ENCODE measurements at regions of chr14 and their contacts with region 1.

Region 1: GRCh38 chr14:91373591-91374254 is 43.9 kb downstream of the CCDC88C start:
- DNase-seq: peak; percentile 83
- H3K4me3 Mint-ChIP-seq: peak overlapping the region; percentile 58
- H3K27ac Mint-ChIP-seq: peak overlapping the region; percentile 93
- H3K4me1 Mint-ChIP-seq: peaks cover 99% of the 10 kb centered on the region
- H3K27me3 Mint-ChIP-seq: no peaks in the 10 kb centered on the region

Region 2: DNA sequence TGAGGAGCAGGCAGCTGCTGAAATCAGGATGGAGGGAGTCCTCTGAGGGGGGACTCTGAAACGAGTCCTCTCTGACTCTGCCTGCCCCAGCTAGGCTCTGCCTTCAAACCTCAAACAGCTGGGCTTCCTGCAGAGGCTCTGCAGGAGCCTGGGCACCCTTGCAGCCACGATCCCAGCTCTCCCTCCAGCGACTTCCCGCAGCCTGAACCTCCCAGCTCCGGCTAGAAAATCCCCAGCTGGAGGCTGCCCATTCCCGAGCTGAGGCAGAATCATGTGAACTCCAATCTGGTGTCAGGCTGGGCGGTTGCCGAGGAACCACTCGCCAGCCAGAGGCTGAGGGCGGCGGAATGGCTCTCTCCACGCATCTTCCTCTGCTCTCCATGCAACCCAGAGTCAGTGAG is 129.2 kb before region 1 on chr14 and contains the start of gene GPR68:
- CTCF ChIA-PET with region 1: interaction called, 3 read pairs
- intact Hi-C with region 1: loop called (anchors 2 kb)
- DNase-seq: peak; percentile 39
- H3K4me3 Mint-ChIP-seq: peak within 1 kb of the TSS; percentile 55
- H3K27ac Mint-ChIP-seq: peak within 1 kb of the TSS; percentile 97
- H3K4me1 Mint-ChIP-seq: peaks cover 81% of the 10 kb centered on the region
- H3K27me3 Mint-ChIP-seq: no peaks in the 10 kb centered on the region
- total RNA-seq, gene GPR68: 1.2 to 1.3 TPM

Region 3: DNA sequence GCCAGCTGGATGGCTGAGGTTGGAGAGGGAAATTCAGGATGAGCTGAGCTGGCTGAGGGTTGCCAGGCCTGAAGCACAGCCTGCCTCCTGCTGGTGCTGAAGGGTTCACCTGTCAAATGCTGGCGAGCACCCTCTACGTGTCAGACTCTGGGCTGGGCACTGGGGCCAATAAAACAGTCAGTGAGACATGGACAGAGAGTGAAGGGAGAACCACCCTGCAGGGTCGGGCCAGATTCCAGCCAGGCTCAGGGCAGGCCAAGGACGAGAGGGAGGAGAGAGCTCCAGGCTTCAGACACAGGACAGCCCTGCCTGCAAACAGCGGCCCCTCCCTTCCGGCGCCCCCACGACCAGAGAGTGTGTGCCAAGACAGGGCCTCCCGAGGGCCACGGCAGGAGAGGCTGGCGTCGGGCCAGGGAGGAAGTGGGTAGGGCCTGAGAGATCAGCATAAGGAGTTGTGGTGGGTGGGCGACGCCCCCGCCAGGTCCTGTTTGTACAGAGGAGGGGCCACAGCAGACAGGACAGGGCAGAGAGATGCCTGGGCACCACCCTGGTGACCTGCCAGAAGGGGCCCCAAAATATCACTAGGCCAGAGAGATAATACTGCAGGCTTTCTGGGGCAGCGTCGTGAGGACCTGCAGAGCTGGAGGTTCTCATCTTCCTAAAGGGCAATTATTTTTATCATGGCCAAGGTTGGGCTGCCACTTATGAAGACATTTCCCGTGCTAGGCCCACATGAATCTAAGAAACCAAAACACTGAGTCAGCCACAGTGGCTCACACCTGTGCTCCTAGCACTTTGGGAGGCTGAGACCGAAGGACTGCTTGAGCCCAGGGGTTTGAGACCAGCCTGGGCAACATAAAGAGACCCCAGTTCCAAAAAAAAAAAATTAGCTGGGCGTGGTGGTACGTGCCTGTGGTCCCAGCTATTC is 56.1 kb before region 1 on chr14:
- CTCF ChIA-PET with region 1: interaction called, 7 read pairs
- intact Hi-C with region 1: loop called (anchors 1 kb)
- DNase-seq: peak; percentile 87
- H3K4me3 Mint-ChIP-seq: peak overlapping the region; percentile 60
- H3K27ac Mint-ChIP-seq: peak overlapping the region; percentile 95
- H3K4me1 Mint-ChIP-seq: peaks cover 72% of the 10 kb centered on the region
- H3K27me3 Mint-ChIP-seq: no peaks in the 10 kb centered on the region

Region 4: GRCh38 chr14:91388551-91388975 is 14.8 kb after region 1 on chr14:
- CTCF ChIA-PET with region 1: no interaction called
- intact Hi-C with region 1: loop called (anchors 1 kb)
- DNase-seq: peak; percentile 69
- H3K4me3 Mint-ChIP-seq: peak overlapping the region; percentile 21
- H3K27ac Mint-ChIP-seq: peak overlapping the region; percentile 63
- H3K4me1 Mint-ChIP-seq: peaks cover 89% of the 10 kb centered on the region
- H3K27me3 Mint-ChIP-seq: no peaks in the 10 kb centered on the region

Region 5: DNA sequence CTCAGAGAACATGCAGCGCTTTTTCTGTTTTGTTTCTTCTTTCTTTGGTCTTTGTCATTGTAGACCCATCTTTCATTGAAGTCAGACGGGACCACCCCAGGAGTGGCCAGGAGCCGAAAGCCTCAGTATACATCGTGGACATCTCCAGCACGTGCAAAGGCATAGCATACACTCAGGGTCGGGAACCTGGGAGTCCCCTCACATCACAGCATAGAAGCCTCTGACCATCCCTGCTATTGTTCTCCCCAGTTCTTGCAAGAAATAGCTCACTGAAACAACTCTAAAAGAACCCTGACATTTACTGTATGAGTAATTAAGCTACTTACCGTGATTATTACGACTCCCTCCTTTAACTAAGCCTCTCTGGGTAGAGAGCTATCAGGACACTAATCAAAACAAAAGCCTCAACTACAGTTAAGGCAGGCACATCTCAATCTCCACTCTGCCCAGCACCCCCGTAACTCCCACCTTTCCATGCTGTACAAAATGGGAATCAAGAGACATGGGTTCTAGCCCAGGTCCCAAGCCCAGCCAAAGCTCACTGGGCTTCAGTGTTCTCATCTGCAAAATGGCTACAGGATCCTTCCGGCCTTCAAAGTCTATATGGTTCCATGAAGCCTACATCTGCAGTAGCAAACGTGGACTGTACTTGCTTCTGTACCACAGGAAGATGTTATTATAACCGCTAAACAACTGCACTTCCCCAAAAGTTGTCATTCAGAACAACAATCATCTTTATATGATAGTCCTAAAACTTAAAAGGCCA is 37.2 kb after region 1 on chr14:
- CTCF ChIA-PET with region 1: interaction called, 11 read pairs
- intact Hi-C with region 1: loop called (anchors 1 kb)
- DNase-seq: peak; percentile 62
- H3K4me3 Mint-ChIP-seq: peak overlapping the region; percentile 53
- H3K27ac Mint-ChIP-seq: peak overlapping the region; percentile 95
- H3K4me1 Mint-ChIP-seq: peaks cover 91% of the 10 kb centered on the region
- H3K27me3 Mint-ChIP-seq: no peaks in the 10 kb centered on the region

Region 6: GRCh38 chr14:92274055-92274454 is 900.3 kb after region 1 on chr14:
- CTCF ChIA-PET with region 1: no interaction called
- intact Hi-C with region 1: no loop called
- DNase-seq: no peak
- H3K4me3 Mint-ChIP-seq: no peak overlapping the region
- H3K27ac Mint-ChIP-seq: no peak overlapping the region
- H3K4me1 Mint-ChIP-seq: no peaks in the 10 kb centered on the region
- H3K27me3 Mint-ChIP-seq: no peaks in the 10 kb centered on the region

Measured in activated naive CD4-positive, alpha-beta T cell treated with anti-CD3 and anti-CD28 coated beads for 36 hours (primary cell).